ENCODE measurements at regions of chr1 and their contacts with region 1.

Region 1: GRCh38 chr1:39609618-39610331 is 29.7 kb downstream of the HEYL start:
- DNase-seq: peak in 1 of 2 experiments; percentile 72
- H3K4me3 ChIP-seq: no peak overlapping the region
- H3K27ac ChIP-seq: no peak overlapping the region
- H3K4me1 ChIP-seq: peaks cover 6% of the 10 kb centered on the region; the same call in 1 of the 2 replicates
- H3K27me3 ChIP-seq: no peaks in the 10 kb centered on the region
- CTCF ChIP-seq: peak; percentile 85

Region 2: GRCh38 chr1:39098546-39099250 is 511.1 kb before region 1 on chr1:
- CTCF ChIA-PET with region 1: interaction called, 3 read pairs
- POLR2A ChIA-PET with region 1: no interaction called
- intact Hi-C with region 1: loop called (anchors 1 kb)
- DNase-seq: peak; percentile 76 to 94
- H3K4me3 ChIP-seq: no peak overlapping the region
- H3K27ac ChIP-seq: no peak overlapping the region
- H3K4me1 ChIP-seq: peaks cover 27% of the 10 kb centered on the region
- H3K27me3 ChIP-seq: no peaks in the 10 kb centered on the region
- CTCF ChIP-seq: peak; percentile 89

Region 3: GRCh38 chr1:39538588-39539465 is 70.9 kb before region 1 on chr1:
- CTCF ChIA-PET with region 1: interaction called, 3 read pairs
- POLR2A ChIA-PET with region 1: no interaction called
- intact Hi-C with region 1: loop called (anchors 1 kb)
- DNase-seq: peak in 1 of 2 experiments; percentile 60
- H3K4me3 ChIP-seq: no peak overlapping the region
- H3K27ac ChIP-seq: no peak overlapping the region
- H3K4me1 ChIP-seq: no peaks in the 10 kb centered on the region
- H3K27me3 ChIP-seq: no peaks in the 10 kb centered on the region
- CTCF ChIP-seq: peak; percentile 86

Region 4: GRCh38 chr1:39590551-39590950 is 19.2 kb before region 1 on chr1:
- CTCF ChIA-PET with region 1: interaction called, 14 read pairs
- POLR2A ChIA-PET with region 1: no interaction called
- intact Hi-C with region 1: loop called (anchors 1 kb)
- DNase-seq: peak; percentile 25 to 71
- H3K4me3 ChIP-seq: no peak overlapping the region
- H3K27ac ChIP-seq: no peak overlapping the region
- H3K4me1 ChIP-seq: peaks cover 32% of the 10 kb centered on the region
- H3K27me3 ChIP-seq: no peaks in the 10 kb centered on the region
- CTCF ChIP-seq: no peak

Region 5: DNA sequence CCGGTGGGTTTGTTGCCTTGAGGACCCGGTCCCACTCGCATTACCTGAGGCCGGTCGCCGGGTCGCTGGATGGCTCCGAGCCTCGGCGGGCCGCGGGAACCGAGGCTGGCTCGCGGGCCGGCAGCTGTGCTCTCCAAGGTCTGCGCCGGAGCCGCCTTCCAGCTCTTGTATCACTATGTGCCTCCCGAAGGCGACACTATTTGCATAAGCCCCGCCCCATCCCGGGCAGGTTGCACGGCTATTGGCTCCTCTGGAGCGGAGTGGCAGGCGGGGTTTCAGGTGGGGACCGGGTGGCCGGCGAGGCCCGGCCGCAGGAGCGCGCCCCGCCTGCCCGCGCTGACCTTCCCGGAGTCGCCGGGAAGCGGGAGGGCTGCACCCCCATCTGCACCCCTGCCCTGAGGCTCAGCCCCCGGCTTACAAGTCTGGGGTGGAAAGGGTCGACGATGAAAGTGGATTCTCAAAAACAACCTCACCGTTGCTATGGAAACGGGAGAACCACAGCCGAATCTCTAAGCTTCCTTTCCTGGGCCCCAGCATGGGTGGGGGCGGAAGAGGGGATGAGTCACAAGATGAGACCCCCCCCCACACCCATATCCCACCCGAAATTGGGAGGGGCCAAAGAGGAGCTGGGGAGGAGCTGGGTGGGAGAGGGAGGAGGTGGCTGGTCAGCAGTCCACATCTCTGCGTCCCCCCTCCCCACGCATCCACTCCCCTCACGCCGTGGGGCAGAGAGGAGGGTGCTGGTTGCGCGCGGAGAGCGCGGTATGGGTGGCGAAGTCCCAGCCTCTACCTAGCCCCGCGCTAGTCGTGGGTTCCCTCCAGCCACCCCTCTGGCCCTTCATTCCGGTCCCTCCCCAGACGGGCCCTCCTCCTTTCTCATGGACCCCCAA is 81.7 kb after region 1 on chr1 and contains the start of gene HPCAL4:
- CTCF ChIA-PET with region 1: interaction called, 13 read pairs
- POLR2A ChIA-PET with region 1: no interaction called
- intact Hi-C with region 1: no loop called
- DNase-seq: peak; percentile 86 to 97
- H3K4me3 ChIP-seq: peak within 1 kb of the TSS; percentile 52
- H3K27ac ChIP-seq: no peak within 1 kb of the TSS
- H3K4me1 ChIP-seq: peaks cover 15% of the 10 kb centered on the region
- H3K27me3 ChIP-seq: peaks cover 7% of the 10 kb centered on the region; the same call in 1 of the 2 replicates
- CTCF ChIP-seq: no peak
- total RNA-seq, gene HPCAL4: 0.07 TPM in 1 of 2 replicates, not detected in the other

Region 6: GRCh38 chr1:39799770-39800470 is 190.1 kb after region 1 on chr1:
- CTCF ChIA-PET with region 1: interaction called, 5 read pairs
- POLR2A ChIA-PET with region 1: no interaction called
- intact Hi-C with region 1: loop called (anchors 1 kb)
- DNase-seq: peak; percentile 82 to 91
- H3K4me3 ChIP-seq: no peak overlapping the region
- H3K27ac ChIP-seq: no peak overlapping the region
- H3K4me1 ChIP-seq: peaks cover 13% of the 10 kb centered on the region
- H3K27me3 ChIP-seq: no peaks in the 10 kb centered on the region
- CTCF ChIP-seq: peak; percentile 96

Region 7: GRCh38 chr1:40040511-40041465 is 431.0 kb after region 1 on chr1 and contains the start of gene CAP1:
- CTCF ChIA-PET with region 1: no interaction called
- POLR2A ChIA-PET with region 1: no interaction called
- intact Hi-C with region 1: loop called (anchors 10 kb)
- DNase-seq: peak; percentile 94 to 100
- H3K4me3 ChIP-seq: peak within 1 kb of the TSS; percentile 99
- H3K27ac ChIP-seq: peak within 1 kb of the TSS; percentile 98
- H3K4me1 ChIP-seq: peaks cover 36% of the 10 kb centered on the region
- H3K27me3 ChIP-seq: no peaks in the 10 kb centered on the region
- CTCF ChIP-seq: no peak
- total RNA-seq, gene CAP1: 322 and 354 TPM in 2 replicates

Measured in PC-9 (cell line).